Right ventricle myocardium superior (tissue), 1 donor: ENCODE measurements at regions of chr1 and their contacts with region 1.

Region 1: DNA sequence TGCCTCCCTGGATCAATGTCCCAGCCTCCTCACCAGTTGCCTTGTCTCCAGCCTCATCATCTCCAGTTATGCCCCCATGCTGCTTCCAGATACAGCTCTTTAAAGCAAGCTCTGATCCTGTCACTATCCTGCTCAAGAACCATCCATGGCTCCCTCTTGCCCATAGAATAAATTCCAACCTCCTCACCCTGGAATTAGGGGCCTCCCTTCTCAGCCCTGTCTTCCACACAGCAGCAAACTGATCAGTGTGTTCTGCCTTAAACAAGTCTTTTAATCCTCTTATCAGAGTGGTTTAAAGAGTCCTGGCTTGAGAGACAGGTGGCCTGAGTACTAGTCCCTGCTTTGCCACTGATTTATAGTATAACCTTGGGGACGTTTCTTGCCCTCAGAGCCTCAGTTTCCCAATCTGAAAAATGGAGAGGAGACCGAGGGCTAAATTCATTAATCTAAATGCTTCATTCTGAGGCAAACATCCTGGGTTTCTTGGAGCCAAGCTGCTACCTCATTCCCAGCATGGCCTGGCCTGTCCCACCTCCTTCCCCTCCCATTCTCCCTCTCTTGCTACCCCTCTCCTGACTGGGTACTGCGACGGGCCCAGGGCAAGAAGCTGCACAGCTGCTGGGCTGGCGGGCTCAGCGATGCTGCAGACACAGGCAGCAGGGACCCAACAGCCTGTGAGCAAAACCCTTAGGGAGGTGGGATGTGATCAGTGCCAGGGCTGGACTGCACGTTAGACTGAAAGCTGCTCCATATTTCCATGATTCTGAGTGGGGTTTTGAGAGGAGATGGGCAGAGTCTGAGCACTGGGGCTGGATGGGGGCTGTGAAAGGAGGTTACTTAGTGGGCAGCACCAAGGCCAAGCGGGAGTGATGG is 221.4 kb downstream of the PTPRU start:
- DNase-seq: no peak
- ATAC-seq: no peak

Region 2: GRCh38 chr1:29282924-29283811 is 174.6 kb before region 1 on chr1:
- intact Hi-C with region 1: no loop called
- DNase-seq: peak; percentile 62
- ATAC-seq: peak; percentile 56

Region 3: DNA sequence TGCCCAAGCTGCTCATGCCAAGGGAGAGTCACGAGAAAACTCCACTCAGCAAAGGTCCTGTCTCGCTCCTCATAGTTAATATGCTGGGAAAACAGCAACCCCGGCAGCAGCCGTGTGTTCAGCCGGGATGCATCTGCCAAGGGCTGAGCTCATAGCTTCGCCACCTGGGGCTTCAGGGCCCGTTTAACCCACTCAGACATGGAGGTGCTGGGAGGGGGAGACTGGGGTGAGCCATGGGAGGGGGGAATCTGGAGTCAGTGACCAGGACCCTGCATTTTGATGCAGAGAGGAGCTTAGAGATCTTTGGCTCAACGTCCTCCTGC is 62.0 kb after region 1 on chr1:
- intact Hi-C with region 1: loop called (anchors 2 kb)
- DNase-seq: no peak
- ATAC-seq: no peak